ENCODE measurements at regions of chr2 and their contacts with region 1.

Region 1: GRCh38 chr2:109173311-109174171 is 44.5 kb downstream of the SH3RF3 start:
- DNase-seq: peak; percentile 63
- H3K4me3 ChIP-seq: no peak overlapping the region
- H3K27ac ChIP-seq: peak overlapping the region; percentile 81 to 88 (median 86)
- H3K4me1 ChIP-seq: peaks cover 10 to 42% (median 30%) of the 10 kb centered on the region in 4 donors
- H3K27me3 ChIP-seq: no peaks in the 10 kb centered on the region
- CTCF ChIP-seq: no peak
- EP300 ChIP-seq: no peak
- POLR2A ChIP-seq: no peak

Region 2: GRCh38 chr2:109009920-109010610 is 163.5 kb before region 1 on chr2:
- in situ Hi-C with region 1: no loop called
- intact Hi-C with region 1: no loop called
- DNase-seq: no peak
- H3K4me3 ChIP-seq: no peak overlapping the region
- H3K27ac ChIP-seq: no peak overlapping the region
- H3K4me1 ChIP-seq: peaks cover 0 to 11% (median 0%) of the 10 kb centered on the region in 4 donors
- H3K27me3 ChIP-seq: no peaks in the 10 kb centered on the region
- CTCF ChIP-seq: no peak
- EP300 ChIP-seq: no peak
- POLR2A ChIP-seq: no peak

Region 3: DNA sequence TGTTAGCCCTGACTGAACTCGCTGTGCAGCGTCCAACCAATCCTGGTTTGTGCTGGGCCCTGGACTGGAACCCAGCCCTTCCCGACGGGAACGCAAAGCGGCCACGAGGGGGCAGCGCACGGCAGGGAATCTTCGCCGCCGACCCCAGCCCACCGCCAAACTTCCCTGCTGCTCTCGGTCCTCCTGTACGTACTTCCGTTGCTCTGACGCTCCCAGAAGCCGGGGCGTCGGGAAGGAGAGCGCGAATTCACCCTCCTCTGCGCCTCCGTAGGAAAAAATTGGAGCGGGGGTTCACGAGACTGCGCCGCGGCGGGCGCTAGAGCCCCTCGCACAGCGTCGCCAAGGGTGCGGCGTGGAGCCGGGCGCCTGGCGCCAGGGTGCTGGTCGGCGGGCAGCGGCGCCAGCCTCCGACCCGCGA is 45.5 kb before region 1 on chr2:
- in situ Hi-C with region 1: no loop called
- intact Hi-C with region 1: no loop called
- DNase-seq: peak; percentile 67
- H3K4me3 ChIP-seq: peak overlapping the region; percentile 51 to 66 (median 58)
- H3K27ac ChIP-seq: peak overlapping the region; percentile 75 to 86 (median 78)
- H3K4me1 ChIP-seq: peaks cover 0 to 19% (median 9%) of the 10 kb centered on the region in 4 donors
- H3K27me3 ChIP-seq: peaks cover 26% of the 10 kb centered on the region
- CTCF ChIP-seq: peak; percentile 79 to 88 (median 81)
- EP300 ChIP-seq: no peak
- POLR2A ChIP-seq: peak; percentile 18

Region 4: GRCh38 chr2:109242654-109243331 is 69.3 kb after region 1 on chr2:
- in situ Hi-C with region 1: no loop called
- intact Hi-C with region 1: loop called (anchors 10 kb)
- DNase-seq: peak; percentile 22
- H3K4me3 ChIP-seq: no peak overlapping the region
- H3K27ac ChIP-seq: peak overlapping the region; percentile 71 to 88 (median 82)
- H3K4me1 ChIP-seq: peaks cover 24 to 51% (median 33%) of the 10 kb centered on the region in 4 donors
- H3K27me3 ChIP-seq: no peaks in the 10 kb centered on the region
- CTCF ChIP-seq: no peak
- EP300 ChIP-seq: no peak
- POLR2A ChIP-seq: no peak